PC-9 (cell line): ENCODE measurements at regions of chr2 and their contacts with region 1.

Region 1: DNA sequence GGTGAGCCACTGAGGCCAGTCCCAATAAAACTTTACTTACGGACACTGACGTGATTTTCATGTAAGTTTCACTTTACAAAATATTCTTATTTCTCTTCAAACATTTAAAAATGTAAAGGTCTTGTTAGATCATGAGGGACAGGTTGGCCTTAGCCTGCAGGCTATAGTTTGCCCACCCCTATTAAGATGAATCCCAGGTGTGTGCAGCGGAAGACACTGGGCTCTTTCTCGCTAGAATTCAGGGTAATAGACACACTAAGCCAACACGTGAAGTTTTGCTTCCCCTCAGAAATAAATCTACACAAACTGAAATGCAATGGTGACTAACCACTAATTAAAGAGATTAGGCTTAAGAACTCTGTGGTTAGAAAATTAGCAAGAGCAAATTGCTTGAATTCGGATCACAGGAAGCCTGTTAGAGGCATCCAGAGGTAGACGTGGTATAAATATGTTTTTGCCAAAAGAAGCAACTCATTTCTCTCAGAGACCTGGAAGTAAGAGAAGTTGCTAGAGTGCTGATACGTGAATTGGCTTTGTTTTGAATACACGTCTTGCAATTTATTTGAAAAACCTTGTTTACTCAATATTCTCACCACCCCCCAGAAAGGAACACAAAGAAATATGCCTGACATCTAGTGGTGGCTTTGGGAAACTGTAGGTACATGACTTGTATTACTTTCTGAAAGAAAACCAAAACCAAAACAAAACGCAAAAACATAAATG is 151.6 kb downstream of the DTNB start:
- DNase-seq: peak; percentile 15 to 63
- H3K4me3 ChIP-seq: no peak overlapping the region; the same call in 1 of the 2 replicates
- H3K27ac ChIP-seq: no peak overlapping the region
- H3K4me1 ChIP-seq: peaks cover 4% of the 10 kb centered on the region
- H3K27me3 ChIP-seq: no peaks in the 10 kb centered on the region
- CTCF ChIP-seq: peak; percentile 89

Region 2: GRCh38 chr2:25228848-25229278 is 293.0 kb before region 1 on chr2:
- CTCF ChIA-PET with region 1: no interaction called
- POLR2A ChIA-PET with region 1: no interaction called
- intact Hi-C with region 1: loop called (anchors 10 kb)
- DNase-seq: peak; percentile 61 to 66
- H3K4me3 ChIP-seq: no peak overlapping the region
- H3K27ac ChIP-seq: no peak overlapping the region
- H3K4me1 ChIP-seq: 0 out of 2 replicates have a peak, but pooled peaks cover 6% of the 10 kb centered on the region
- H3K27me3 ChIP-seq: no peaks in the 10 kb centered on the region
- CTCF ChIP-seq: peak; percentile 86

Region 3: DNA sequence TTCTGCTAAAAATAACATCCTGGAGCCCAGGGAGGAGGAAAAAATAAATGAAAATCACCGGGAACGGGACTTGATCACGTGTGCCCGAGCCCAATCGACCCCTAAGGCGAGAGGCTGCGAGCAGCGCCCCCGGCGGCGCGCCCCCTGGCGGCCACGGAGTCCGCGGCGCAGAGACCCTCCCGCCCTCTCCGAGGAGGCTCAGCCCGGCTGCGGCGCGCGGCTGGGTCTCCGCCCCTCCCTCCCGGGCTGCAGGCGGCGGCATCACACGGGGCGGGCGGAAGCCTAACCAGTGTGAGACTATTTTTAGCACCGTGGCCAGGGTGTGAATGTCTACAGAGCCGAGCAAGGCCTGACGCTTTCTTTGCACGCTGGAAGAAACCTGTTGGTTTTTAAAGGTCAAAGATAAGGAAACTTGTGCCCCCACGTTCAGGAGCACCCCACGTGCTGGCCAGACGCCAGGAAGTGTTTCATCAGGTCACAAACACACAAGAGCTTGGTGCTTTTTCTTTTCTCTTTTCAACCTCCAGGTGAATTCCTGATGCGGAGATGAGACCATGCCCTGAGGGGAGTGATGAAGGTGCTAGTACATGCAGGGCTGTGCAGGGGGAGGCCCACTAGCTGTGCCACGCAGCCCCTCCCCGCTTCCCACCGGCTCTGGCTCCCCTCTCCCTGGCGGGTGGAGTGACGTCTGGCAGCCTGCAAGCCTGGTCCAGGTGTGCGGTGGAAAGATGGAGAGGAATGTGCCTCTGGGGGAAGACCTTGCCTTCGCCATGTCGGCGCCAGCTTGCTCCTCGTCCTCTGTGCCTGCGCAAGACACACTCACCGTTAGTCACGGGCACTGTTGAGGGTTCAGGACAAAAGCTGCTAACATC is 144.8 kb before region 1 on chr2:
- CTCF ChIA-PET with region 1: no interaction called
- POLR2A ChIA-PET with region 1: no interaction called
- intact Hi-C with region 1: loop called (anchors 1 kb)
- DNase-seq: peak; percentile 76 to 91
- H3K4me3 ChIP-seq: peak overlapping the region; percentile 39; the same call in 1 of the 2 replicates
- H3K27ac ChIP-seq: peak overlapping the region; percentile 16; the same call in 1 of the 2 replicates
- H3K4me1 ChIP-seq: peaks cover 8% of the 10 kb centered on the region
- H3K27me3 ChIP-seq: no peaks in the 10 kb centered on the region
- CTCF ChIP-seq: peak; percentile 95

Region 4: GRCh38 chr2:26327291-26328272 is 805.8 kb after region 1 on chr2:
- CTCF ChIA-PET with region 1: no interaction called
- POLR2A ChIA-PET with region 1: no interaction called
- intact Hi-C with region 1: no loop called
- DNase-seq: peak in 1 of 2 experiments; percentile 41
- H3K4me3 ChIP-seq: no peak overlapping the region
- H3K27ac ChIP-seq: no peak overlapping the region
- H3K4me1 ChIP-seq: peaks cover 5% of the 10 kb centered on the region; the same call in 1 of the 2 replicates
- H3K27me3 ChIP-seq: no peaks in the 10 kb centered on the region
- CTCF ChIP-seq: no peak